Activated CD8-positive, alpha-beta T cell treated with anti-CD3 and anti-CD28 coated beads, Interleukin-2, amount 10 ng/mL, durations not matched to agents 7 days and 5 days (primary cell): ENCODE measurements at regions of chr2 and their contacts with region 1.

Region 1: DNA sequence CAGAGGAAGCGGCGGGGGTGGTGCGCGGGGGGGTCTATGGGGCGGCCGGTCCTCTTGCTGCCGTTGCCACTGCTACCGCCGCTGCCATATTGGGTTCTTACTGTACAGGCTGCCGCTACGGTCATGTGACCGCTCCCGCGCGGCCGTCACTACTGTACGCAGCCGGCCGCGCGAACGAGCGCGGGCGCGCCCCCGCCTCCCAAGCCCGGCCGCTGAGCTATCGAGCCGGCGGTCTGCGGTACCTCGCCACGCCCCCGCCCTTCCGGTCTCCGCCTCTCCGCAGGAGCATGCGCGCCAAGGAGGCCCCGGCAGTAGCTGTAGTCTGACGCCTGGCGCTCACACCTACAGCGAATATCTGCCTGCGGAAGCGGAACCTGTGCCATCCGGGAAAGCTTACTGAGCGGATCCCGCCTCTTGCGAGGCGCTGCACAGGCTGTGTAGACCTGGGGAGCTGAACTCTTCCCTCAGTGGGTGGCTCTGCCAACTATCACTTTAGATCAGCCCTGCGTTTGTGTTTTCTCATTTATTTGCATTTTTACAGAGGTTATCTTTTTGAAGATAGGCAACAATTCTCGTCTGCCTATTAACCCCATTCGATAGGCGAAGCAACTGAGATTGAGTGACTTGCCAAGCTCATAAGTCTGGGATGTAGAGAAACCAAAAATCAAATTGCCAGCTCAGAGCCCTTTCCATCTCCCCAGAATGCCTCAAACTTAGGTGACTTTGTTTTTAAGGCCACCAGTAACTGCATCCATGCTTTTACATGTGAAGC is at the start of gene ASXL2:
- DNase-seq: peak; percentile 97
- ATAC-seq: peak; percentile 91
- H3K4me3 Mint-ChIP-seq: peak within 1 kb of the TSS; percentile 97
- H3K27ac Mint-ChIP-seq: peak within 1 kb of the TSS; percentile 99
- H3K4me1 Mint-ChIP-seq: peaks cover 30% of the 10 kb centered on the region
- H3K27me3 Mint-ChIP-seq: no peaks in the 10 kb centered on the region
- total RNA-seq, gene ASXL2: 44.0 to 45.0 TPM

Region 2: GRCh38 chr2:25917832-25918231 is 39.3 kb after region 1 on chr2:
- CTCF ChIA-PET with region 1: interaction called, 6 read pairs
- POLR2A ChIA-PET with region 1: interaction called, 12 read pairs
- DNase-seq: no peak
- ATAC-seq: no peak
- H3K4me3 Mint-ChIP-seq: no peak overlapping the region
- H3K27ac Mint-ChIP-seq: no peak overlapping the region
- H3K4me1 Mint-ChIP-seq: peaks cover 13% of the 10 kb centered on the region
- H3K27me3 Mint-ChIP-seq: peaks cover 9% of the 10 kb centered on the region

Region 3: GRCh38 chr2:25972049-25972823 is 93.7 kb after region 1 on chr2:
- CTCF ChIA-PET with region 1: no interaction called
- POLR2A ChIA-PET with region 1: no interaction called
- DNase-seq: no peak
- ATAC-seq: no peak
- H3K4me3 Mint-ChIP-seq: no peak overlapping the region
- H3K27ac Mint-ChIP-seq: no peak overlapping the region
- H3K4me1 Mint-ChIP-seq: no peaks in the 10 kb centered on the region
- H3K27me3 Mint-ChIP-seq: no peaks in the 10 kb centered on the region